ENCODE measurements at regions of chr11 and their contacts with region 1.

Region 1: DNA sequence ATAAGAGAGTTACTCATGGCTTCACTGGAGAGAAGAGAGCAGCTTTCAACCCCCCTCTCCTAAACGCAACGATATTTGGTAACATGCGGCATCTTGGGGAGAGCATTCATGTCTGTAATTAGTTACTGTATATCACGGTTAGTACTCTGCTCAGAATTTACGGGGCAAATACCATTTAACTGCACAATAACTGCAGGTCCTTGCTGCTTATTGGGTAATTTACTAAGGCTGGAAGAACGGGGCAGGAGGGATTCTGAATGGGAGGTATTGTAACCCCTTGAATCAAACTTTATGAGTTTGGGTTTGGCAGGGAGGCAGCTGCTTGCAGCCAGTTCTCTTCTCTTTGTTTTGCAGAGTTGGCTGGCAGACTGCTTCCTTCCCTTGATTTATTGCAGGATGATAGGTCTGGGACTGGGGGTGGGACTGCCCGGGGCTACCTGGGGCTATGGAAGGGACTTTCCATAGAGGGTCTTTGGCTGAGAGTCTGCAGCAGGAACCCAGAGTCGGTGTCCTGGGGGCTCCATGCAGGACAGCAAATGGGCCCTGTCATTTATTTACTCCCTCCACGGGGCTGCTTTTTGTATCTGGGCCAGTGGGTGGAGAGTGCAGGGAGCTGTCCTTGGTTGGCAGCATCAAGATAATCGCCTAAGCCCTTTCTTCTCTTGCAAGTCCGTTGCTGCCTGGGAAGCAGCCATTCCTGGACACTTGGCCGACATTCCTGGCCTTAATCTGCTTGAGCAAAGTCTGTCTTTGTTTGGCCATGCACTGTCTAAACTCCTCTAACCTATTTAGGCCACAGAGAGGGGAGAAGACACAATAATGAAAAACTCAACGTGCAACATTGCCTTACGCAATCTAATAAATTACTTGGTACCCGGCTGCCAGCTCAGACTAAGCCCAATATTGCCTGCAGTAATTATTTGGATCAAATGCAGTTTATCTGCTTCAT is 188.9 kb downstream of the ST3GAL4 start:
- DNase-seq: peak in 1 of 2 donors; percentile 72
- H3K4me3 ChIP-seq: peak overlapping the region in 1 of 3 donors; percentile 19
- H3K27ac ChIP-seq: peak overlapping the region; percentile 40 to 54
- H3K4me1 ChIP-seq: no peaks in the 10 kb centered on the region
- H3K27me3 ChIP-seq: no peaks in the 10 kb centered on the region
- CTCF ChIP-seq: no peak
- POLR2A ChIP-seq: no peak

Region 2: DNA sequence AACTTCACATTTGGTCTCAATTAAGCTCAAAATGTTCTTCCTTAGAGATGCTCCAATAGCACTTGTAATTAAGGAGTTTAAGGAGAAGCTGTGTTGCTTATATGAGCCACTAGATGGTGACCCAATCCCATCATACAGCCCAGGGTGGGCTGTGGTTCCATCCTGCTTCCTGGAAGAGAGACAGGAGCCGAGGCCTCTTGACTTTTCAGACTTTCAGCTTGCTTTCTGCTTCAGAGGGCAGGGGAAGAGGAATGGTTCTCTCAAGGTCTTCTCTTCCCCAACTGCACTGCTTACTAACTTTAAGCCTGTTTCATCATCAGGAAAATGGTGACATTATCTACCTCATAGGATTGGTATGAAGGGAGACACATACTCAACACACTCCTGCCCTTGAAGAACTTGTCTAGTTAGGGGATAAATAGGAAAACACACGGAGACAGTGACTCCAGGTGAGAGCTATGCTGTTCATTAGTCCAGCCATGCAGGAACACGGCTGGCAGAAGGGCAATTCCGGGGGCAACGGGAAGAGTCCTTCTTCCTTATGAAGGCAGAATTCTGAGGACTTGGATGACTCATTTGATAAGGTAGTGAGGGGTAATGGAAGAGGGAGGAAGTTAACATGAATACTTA is 1453.0 kb before region 1 on chr11:
- intact Hi-C with region 1: loop called (anchors 5 kb)
- DNase-seq: no peak
- H3K4me3 ChIP-seq: no peak overlapping the region
- H3K27ac ChIP-seq: no peak overlapping the region
- H3K4me1 ChIP-seq: no peaks in the 10 kb centered on the region
- H3K27me3 ChIP-seq: no peaks in the 10 kb centered on the region
- CTCF ChIP-seq: peak in 2 of 3 donors; percentile 32 to 57
- POLR2A ChIP-seq: no peak

Region 3: DNA sequence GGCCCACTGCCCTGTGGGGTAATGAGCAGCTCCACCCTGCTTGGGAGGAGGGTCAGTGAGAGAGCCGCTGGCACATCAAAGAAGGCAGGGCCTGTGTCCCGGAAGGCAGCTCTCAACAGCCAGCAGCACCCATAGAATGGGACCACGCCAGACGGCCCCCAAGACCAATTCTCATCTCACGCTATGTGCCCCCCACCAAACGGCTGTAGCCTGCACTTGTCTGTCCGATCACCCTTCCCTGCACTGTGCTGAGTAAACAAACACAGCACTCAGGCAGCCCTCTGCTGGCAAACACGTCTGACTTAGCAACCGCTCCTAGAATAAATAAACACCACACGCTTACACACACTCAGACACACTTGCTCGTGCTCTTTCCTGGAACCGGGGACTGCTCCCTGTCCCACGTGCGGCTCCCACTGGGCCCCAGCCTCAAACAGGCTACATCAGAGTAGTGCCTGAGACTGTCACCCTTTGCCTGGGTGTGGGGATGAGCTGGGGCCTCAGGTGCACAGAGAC is 428.5 kb before region 1 on chr11:
- intact Hi-C with region 1: no loop called
- DNase-seq: peak; percentile 75 to 80
- H3K4me3 ChIP-seq: peak overlapping the region in 1 of 3 donors; percentile 9
- H3K27ac ChIP-seq: peak overlapping the region; percentile 80 to 84
- H3K4me1 ChIP-seq: peaks cover 6 to 14% of the 10 kb centered on the region in 2 donors
- H3K27me3 ChIP-seq: no peaks in the 10 kb centered on the region
- CTCF ChIP-seq: peak in 2 of 3 donors; percentile 23 to 29
- POLR2A ChIP-seq: no peak

Region 4: GRCh38 chr11:126585781-126586491 is 41.6 kb after region 1 on chr11:
- intact Hi-C with region 1: no loop called
- DNase-seq: peak in 1 of 2 donors; percentile 39
- H3K4me3 ChIP-seq: peak overlapping the region; percentile 25 to 53 (median 28)
- H3K27ac ChIP-seq: peak overlapping the region; percentile 59 to 66
- H3K4me1 ChIP-seq: no peaks in the 10 kb centered on the region
- H3K27me3 ChIP-seq: no peaks in the 10 kb centered on the region
- CTCF ChIP-seq: no peak
- POLR2A ChIP-seq: no peak

Region 5: DNA sequence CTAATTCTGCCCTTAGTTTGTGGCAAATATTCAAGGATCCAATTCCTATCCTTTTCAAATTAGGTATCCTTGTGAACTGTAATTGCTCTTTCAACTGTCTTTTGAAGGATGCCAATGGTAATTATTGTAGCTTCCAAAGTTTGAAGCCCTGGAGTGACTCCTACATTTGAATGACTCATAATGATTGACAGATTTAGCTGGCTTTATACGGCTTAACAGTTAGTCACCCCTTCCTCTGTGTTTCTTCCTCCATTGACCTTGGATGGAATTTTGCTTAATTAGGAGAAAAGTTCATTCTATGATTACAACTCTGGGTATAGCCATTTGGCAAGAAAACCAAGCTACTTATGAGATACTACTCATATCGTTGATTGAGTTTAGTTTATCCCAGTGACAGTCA is 1095.5 kb after region 1 on chr11:
- intact Hi-C with region 1: loop called (anchors 10 kb)
- DNase-seq: no peak
- H3K4me3 ChIP-seq: no peak overlapping the region
- H3K27ac ChIP-seq: no peak overlapping the region
- H3K4me1 ChIP-seq: no peaks in the 10 kb centered on the region
- H3K27me3 ChIP-seq: no peaks in the 10 kb centered on the region
- CTCF ChIP-seq: no peak
- POLR2A ChIP-seq: no peak

Measured in breast epithelium (tissue), 4 donors.